Sciatic nerve (tissue), 2 donors: ENCODE measurements at regions of chr17 and their contacts with region 1.

Region 1: GRCh38 chr17:49399995-49400394 is 14.7 kb downstream of the PHB1 start:
- DNase-seq: peak; percentile 8
- ATAC-seq: no peak

Region 2: GRCh38 chr17:49315551-49316257 is 84.3 kb before region 1 on chr17:
- intact Hi-C with region 1: loop called (anchors 5 kb)
- DNase-seq: peak; percentile 75
- ATAC-seq: peak; percentile 98